ENCODE measurements at regions of chr14 and their contacts with region 1.

Region 1: GRCh38 chr14:102949062-102949800 is 26.8 kb downstream of the AMN start:
- DNase-seq: peak; percentile 57
- ATAC-seq: peak; percentile 87
- H3K4me3 Mint-ChIP-seq: peak overlapping the region; percentile 36
- H3K27ac Mint-ChIP-seq: peak overlapping the region; percentile 65
- H3K4me1 Mint-ChIP-seq: peaks cover 32% of the 10 kb centered on the region
- H3K27me3 Mint-ChIP-seq: no peaks in the 10 kb centered on the region
- CTCF ChIP-seq: no peak

Region 2: DNA sequence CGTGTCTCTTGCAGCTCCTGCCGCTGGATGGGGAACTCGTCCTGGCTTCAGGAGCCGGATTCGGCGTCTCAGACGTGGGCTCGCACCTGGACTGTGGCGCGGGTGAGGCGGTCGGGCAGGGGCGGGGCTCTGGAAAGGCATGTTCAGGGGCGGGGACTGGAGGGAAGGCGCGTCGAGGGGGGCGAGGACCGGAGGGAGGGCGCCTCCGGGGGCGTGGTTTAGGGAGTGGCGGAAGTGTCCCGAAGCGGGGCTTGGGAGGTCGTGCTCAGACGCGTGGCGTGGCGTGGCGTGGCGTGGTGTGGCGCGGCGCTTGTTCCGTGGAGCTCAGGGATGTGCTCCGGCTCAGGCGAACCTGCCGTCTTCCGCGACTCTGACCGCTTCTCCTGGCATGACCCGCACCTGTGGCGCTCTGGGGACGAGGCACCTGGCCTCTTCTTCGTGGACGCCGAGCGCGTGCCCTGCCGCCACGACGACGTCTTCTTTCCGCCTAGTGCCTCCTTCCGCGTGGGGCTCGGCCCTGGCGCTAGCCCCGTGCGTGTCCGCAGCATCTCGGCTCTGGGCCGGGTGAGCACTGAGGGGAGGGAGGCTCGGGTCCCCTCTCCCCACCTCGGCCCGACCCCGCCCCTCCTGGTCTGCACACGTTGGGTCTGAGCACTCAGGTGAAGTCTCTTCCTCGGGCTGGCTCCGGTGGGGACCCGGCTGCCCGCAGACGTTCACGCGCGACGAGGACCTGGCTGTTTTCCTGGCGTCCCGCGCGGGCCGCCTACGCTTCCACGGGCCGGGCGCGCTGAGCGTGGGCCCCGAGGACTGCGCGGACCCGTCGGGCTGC is 20.6 kb before region 1 on chr14:
- CTCF ChIA-PET with region 1: no interaction called
- POLR2A ChIA-PET with region 1: interaction called, 3 read pairs
- intact Hi-C with region 1: loop called (anchors 1 kb)
- DNase-seq: peak; percentile 72
- ATAC-seq: peak; percentile 88
- H3K4me3 Mint-ChIP-seq: peak overlapping the region; percentile 76
- H3K27ac Mint-ChIP-seq: no peak overlapping the region
- H3K4me1 Mint-ChIP-seq: peaks cover 17% of the 10 kb centered on the region
- H3K27me3 Mint-ChIP-seq: peaks cover 6% of the 10 kb centered on the region
- CTCF ChIP-seq: no peak

Region 3: DNA sequence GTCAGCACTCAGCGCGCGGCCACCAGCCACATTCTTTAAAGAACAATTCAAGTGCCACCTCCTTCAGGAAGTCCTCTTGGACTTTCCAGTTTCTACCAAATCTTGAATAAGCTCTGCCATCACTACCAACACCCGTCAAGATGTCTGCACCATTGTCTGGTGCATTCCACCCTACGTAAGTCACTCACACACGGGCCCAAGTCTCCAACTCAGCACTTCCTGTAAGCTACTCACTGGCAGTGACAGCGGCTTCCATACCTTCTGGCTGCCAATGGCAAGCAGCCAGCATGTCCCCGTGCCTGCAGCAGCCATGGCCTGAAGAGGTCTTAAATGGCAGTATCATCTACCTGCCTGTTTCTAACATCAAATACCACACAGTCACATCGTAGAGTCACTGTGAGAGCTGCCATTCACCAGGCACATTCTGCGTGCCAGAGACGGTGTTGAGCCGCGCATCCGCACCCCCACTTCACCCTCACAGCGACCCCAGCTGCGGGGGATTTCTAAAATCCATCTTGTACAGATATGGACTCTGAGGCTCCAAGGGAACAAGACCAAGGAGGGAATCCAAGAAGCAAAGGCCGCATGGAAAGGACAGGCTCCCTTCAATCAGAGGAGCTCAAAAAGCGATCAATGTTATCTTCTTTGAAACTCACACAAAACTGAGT is 59.8 kb after region 1 on chr14:
- CTCF ChIA-PET with region 1: no interaction called
- POLR2A ChIA-PET with region 1: no interaction called
- intact Hi-C with region 1: no loop called
- DNase-seq: no peak
- ATAC-seq: no peak
- H3K4me3 Mint-ChIP-seq: no peak overlapping the region
- H3K27ac Mint-ChIP-seq: no peak overlapping the region
- H3K4me1 Mint-ChIP-seq: no peaks in the 10 kb centered on the region
- H3K27me3 Mint-ChIP-seq: no peaks in the 10 kb centered on the region
- CTCF ChIP-seq: no peak

Measured in activated B cell treated with CpG ODN at 0.5 μM for 24 hours (primary cell).